CD14-positive monocyte (primary cell): ENCODE measurements at regions of chr15 and their contacts with region 1.

Region 1: GRCh38 chr15:75185271-75186029 is 16.2 kb upstream of the C15orf39 start:
- DNase-seq: no peak
- H3K4me3 ChIP-seq: no peak overlapping the region
- H3K4me3 Mint-ChIP-seq: no peak overlapping the region
- H3K27ac ChIP-seq: no peak overlapping the region
- H3K27ac Mint-ChIP-seq: no peak overlapping the region
- H3K4me1 ChIP-seq: peaks cover 23 to 27% of the 10 kb centered on the region in 2 donors
- H3K4me1 Mint-ChIP-seq: peaks cover 31% of the 10 kb centered on the region
- H3K27me3 ChIP-seq: peaks cover 0 to 6% of the 10 kb centered on the region in 2 donors
- H3K27me3 Mint-ChIP-seq: peaks cover 7 to 13% (median 11%) of the 10 kb centered on the region in 3 donors
- CTCF ChIP-seq: no peak

Region 2: GRCh38 chr15:75153087-75153486 is 32.4 kb before region 1 on chr15:
- intact Hi-C with region 1: loop called in 1 of 2 experiments (anchors 5 kb)
- DNase-seq: peak; percentile 72 to 87 (median 83)
- H3K4me3 ChIP-seq: peak overlapping the region in 1 of 3 experiments; percentile 62
- H3K4me3 Mint-ChIP-seq: peak overlapping the region in 1 of 2 donors; percentile 79
- H3K27ac ChIP-seq: peak overlapping the region; percentile 77 to 81
- H3K27ac Mint-ChIP-seq: peak overlapping the region; percentile 88 to 95 (median 93)
- H3K4me1 ChIP-seq: peaks cover 80 to 85% of the 10 kb centered on the region in 2 donors
- H3K4me1 Mint-ChIP-seq: peaks cover 79% of the 10 kb centered on the region
- H3K27me3 ChIP-seq: no peaks in the 10 kb centered on the region
- H3K27me3 Mint-ChIP-seq: peaks cover 0 to 7% (median 2%) of the 10 kb centered on the region in 3 donors
- CTCF ChIP-seq: no peak